ENCODE measurements at regions of chr16 and their contacts with region 1.

Region 1: GRCh38 chr16:4402439-4403132 is 13.8 kb downstream of the CORO7 start:
- DNase-seq: peak; percentile 77
- H3K4me3 Mint-ChIP-seq: no peak overlapping the region
- H3K27ac Mint-ChIP-seq: no peak overlapping the region
- H3K4me1 Mint-ChIP-seq: no peaks in the 10 kb centered on the region
- H3K27me3 Mint-ChIP-seq: no peaks in the 10 kb centered on the region
- CTCF ChIP-seq: peak; percentile 97

Region 2: DNA sequence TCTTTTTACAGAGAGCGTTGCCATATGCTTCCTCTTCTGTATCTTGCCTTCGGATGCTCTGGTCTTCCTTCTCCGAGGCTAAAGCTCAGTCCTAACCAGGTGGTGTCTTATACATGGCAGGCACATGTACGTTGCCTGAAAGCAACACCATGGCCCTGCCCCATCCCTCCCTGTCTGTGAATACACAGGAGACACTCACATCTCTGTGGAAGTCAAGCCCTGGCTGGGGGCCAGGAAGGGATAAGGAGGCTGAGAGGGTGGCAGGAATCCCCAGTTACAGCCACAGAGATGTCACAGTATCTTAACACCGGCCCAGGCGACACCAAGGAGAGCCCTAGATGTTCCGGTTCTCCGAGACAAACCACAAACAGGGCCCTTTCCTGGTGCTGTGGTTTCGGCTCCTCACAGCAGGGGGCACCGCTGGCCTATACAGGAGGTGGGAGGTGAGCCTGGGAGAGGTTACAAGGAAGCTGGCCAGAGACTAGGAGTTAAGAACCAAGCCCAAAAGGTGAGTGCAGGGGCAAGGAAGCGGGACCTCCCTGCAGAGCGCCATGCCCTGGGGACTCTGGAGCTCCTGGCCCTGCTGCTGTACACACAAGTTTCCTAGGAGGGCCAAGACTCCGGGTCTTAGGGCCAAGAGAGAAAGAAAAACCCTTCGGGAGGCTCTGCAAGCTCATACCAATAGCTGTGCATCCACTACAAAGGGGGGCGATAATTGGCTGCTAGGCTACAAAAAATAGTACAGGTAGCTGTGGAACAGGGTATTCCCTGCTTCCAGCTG is 202.4 kb before region 1 on chr16:
- CTCF ChIA-PET with region 1: interaction called, 4 read pairs
- POLR2A ChIA-PET with region 1: no interaction called
- intact Hi-C with region 1: loop called (anchors 5 kb)
- DNase-seq: peak; percentile 80
- H3K4me3 Mint-ChIP-seq: no peak overlapping the region
- H3K27ac Mint-ChIP-seq: no peak overlapping the region
- H3K4me1 Mint-ChIP-seq: peaks cover 10% of the 10 kb centered on the region
- H3K27me3 Mint-ChIP-seq: no peaks in the 10 kb centered on the region
- CTCF ChIP-seq: peak; percentile 84

Region 3: GRCh38 chr16:4288148-4288921 is 114.3 kb before region 1 on chr16:
- CTCF ChIA-PET with region 1: interaction called, 31 read pairs
- POLR2A ChIA-PET with region 1: no interaction called
- intact Hi-C with region 1: loop called (anchors 5 kb)
- DNase-seq: peak; percentile 66
- H3K4me3 Mint-ChIP-seq: peak overlapping the region; percentile 23
- H3K27ac Mint-ChIP-seq: peak overlapping the region; percentile 75
- H3K4me1 Mint-ChIP-seq: peaks cover 41% of the 10 kb centered on the region
- H3K27me3 Mint-ChIP-seq: no peaks in the 10 kb centered on the region
- CTCF ChIP-seq: peak; percentile 86

Region 4: DNA sequence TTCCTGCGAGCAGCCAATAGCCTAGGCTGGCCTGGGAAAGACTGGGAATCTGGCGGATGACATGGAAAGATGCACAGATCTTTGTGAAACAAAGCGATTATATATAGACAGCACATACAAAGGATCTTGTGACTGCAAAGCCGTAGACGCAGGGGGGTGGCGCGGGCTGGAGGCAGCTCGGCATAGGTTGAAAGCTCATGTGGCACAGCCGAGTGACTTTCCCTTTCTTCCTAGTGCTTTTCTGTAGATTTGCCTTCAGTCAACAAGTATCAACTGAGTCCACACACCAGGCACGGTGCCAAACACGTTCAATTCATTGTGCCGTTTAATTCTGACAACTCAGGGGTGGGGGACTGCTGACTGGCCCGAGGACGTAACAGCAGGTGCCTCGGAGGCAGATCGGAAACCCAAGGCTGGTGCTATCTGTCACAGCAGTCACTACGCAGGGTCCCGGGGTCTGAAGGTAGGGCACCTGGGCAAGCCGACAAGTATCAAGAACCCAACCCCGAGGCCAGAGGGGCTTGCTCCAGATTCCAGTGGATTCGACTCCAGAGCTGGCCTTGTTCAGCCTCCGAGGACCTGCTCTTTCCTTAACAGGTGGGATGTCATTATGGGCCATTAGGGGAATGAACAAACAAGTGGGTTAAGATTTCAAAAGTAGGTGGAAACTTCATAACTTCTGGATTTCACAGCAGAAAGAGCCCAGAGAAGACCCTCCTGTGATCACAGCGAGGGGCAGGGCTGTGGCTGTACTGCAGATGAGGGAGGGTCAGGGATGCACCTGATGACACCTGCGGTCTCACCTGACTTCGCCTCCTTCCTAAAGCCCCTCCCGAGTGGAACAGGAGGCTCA is 57.4 kb before region 1 on chr16:
- CTCF ChIA-PET with region 1: interaction called, 75 read pairs
- POLR2A ChIA-PET with region 1: interaction called, 3 read pairs
- intact Hi-C with region 1: no loop called
- DNase-seq: no peak
- H3K4me3 Mint-ChIP-seq: no peak overlapping the region
- H3K27ac Mint-ChIP-seq: no peak overlapping the region
- H3K4me1 Mint-ChIP-seq: peaks cover 8% of the 10 kb centered on the region
- H3K27me3 Mint-ChIP-seq: no peaks in the 10 kb centered on the region
- CTCF ChIP-seq: no peak

Region 5: DNA sequence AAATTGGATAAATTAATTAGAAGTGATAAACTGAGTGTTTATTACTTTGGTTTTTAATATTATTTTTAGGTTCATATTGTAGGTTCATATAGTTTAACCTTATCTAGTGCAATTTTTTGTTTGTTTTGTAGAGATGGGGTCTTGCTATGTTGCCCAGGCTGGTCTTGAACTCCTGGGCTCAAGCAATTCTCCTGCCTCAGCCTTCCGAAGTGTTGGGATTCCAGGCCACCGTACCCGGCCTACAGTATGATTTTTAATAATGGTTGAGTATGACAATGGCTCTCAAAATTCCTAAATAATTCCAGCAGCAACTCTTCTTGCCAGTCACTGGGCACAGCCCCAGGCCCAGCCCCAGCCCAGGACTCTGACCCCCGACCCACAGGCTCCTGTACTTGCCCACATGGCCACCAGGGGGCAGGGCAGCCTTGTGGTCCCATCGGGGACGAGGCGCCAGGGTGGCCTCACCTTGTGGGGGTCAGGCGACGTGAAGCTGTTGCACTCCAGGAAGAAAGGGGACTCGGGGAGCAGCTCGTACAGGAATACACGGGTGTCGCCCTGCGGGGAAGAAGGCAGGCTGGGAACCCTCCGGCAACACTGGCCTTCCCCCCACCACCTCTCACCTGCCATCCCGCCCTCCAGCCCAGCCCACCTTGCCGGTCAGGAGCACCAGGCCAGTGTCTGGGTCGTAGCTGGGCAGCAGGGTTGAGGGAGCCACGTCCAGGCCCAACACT is 43.6 kb before region 1 on chr16:
- CTCF ChIA-PET with region 1: interaction called, 263 read pairs
- POLR2A ChIA-PET with region 1: interaction called, 3 read pairs
- intact Hi-C with region 1: loop called (anchors 1 kb)
- DNase-seq: peak; percentile 48
- H3K4me3 Mint-ChIP-seq: no peak overlapping the region
- H3K27ac Mint-ChIP-seq: no peak overlapping the region
- H3K4me1 Mint-ChIP-seq: no peaks in the 10 kb centered on the region
- H3K27me3 Mint-ChIP-seq: no peaks in the 10 kb centered on the region
- CTCF ChIP-seq: peak; percentile 96

Region 6: DNA sequence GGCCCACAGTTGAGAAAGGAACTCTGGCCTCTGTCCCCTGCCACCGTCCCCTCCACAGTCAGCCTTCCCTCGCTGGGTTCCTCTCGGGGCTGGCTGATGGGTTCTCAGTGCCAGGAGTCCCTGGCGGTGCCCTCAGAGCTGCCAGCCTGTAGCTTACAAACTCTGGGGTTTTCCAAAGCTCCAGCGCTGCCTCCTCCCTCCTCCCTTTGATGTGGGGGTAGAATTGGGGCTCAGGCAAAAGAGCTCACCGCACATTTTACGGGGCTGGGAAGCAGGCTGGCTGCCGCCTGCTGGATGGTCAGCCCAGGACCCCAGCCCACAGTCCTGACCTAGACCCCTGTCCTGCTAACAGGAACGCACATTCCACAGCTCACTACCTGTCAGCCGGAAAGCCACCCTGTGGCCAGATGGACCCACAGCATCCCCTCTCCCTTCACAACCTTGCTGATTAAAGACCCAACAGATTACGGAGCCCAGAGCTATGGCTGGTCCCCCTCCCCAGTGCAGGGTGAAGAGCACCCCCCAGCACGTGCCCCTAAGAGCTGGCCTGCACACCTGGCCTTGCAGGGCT is 24.9 kb before region 1 on chr16:
- CTCF ChIA-PET with region 1: interaction called, 47 read pairs
- POLR2A ChIA-PET with region 1: interaction called, 4 read pairs
- intact Hi-C with region 1: no loop called
- DNase-seq: no peak
- H3K4me3 Mint-ChIP-seq: no peak overlapping the region
- H3K27ac Mint-ChIP-seq: no peak overlapping the region
- H3K4me1 Mint-ChIP-seq: peaks cover 26% of the 10 kb centered on the region
- H3K27me3 Mint-ChIP-seq: no peaks in the 10 kb centered on the region
- CTCF ChIP-seq: no peak